ENCODE measurements at regions of chr2 and their contacts with region 1.

Region 1: DNA sequence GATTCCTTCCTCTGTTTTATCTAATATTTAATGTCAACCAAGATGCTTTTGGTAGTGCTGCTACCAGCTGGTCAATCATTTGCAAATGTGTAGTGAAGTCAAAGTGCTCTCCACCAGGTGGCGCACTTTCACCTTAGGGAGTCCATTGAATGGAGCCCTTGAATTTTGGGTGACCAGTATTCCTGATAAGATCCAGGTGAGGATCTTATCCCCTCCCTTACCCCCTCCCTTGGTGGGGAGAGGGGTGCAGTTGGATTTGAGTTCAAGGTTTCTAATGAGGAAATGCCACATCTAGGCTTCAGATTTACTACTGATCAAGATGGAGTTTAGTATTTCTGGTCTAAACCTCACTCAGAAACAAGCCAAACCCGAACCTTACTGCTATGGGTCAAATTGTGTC is 12.0 kb upstream of the E2F6 start:
- DNase-seq: peak in 2 of 3 donors; percentile 83 to 98
- ATAC-seq: peak; percentile 80
- H3K4me3 ChIP-seq: no peak overlapping the region
- H3K4me1 ChIP-seq: no peaks in the 10 kb centered on the region
- CTCF ChIP-seq: peak; percentile 63

Region 2: GRCh38 chr2:11583840-11584524 is 106.0 kb after region 1 on chr2:
- intact Hi-C with region 1: loop called (anchors 5 kb)
- DNase-seq: peak in 2 of 3 donors; percentile 67 to 72
- ATAC-seq: peak; percentile 80
- H3K4me3 ChIP-seq: no peak overlapping the region
- H3K4me1 ChIP-seq: peaks cover 3% of the 10 kb centered on the region
- CTCF ChIP-seq: peak; percentile 42

Region 3: DNA sequence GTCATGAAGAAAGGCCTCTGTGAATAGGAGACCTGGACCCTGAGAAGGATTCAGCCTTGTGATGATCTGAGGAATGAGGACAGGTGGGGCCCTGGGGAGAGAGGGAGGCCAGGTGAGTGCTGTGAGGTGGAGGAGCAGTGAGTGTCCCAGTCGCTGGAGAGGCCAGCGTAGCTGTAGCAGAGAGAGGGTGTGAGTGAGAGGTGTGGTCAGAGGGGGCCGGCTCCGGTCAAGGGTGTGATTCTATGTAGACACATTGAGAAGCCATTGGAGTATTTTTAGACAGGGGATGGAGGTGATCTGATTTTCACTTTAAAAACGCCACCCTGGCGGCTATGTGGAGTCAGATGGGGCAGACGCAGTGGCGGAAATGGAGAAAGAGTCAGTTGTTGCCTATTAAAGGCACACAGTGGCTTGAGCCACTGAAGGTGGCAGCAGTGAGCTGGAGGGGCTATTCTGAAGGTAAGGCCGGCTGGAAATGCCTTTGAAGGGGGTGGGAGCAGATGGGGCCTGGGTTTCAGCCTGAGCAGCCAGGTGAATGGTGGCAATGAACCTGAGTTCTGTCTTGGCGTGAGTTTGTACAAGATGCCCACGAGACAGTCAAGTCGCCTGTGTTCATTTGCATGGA is 111.4 kb after region 1 on chr2:
- intact Hi-C with region 1: loop called (anchors 5 kb)
- DNase-seq: no peak
- ATAC-seq: no peak
- H3K4me3 ChIP-seq: no peak overlapping the region
- H3K4me1 ChIP-seq: no peaks in the 10 kb centered on the region
- CTCF ChIP-seq: no peak

Region 4: DNA sequence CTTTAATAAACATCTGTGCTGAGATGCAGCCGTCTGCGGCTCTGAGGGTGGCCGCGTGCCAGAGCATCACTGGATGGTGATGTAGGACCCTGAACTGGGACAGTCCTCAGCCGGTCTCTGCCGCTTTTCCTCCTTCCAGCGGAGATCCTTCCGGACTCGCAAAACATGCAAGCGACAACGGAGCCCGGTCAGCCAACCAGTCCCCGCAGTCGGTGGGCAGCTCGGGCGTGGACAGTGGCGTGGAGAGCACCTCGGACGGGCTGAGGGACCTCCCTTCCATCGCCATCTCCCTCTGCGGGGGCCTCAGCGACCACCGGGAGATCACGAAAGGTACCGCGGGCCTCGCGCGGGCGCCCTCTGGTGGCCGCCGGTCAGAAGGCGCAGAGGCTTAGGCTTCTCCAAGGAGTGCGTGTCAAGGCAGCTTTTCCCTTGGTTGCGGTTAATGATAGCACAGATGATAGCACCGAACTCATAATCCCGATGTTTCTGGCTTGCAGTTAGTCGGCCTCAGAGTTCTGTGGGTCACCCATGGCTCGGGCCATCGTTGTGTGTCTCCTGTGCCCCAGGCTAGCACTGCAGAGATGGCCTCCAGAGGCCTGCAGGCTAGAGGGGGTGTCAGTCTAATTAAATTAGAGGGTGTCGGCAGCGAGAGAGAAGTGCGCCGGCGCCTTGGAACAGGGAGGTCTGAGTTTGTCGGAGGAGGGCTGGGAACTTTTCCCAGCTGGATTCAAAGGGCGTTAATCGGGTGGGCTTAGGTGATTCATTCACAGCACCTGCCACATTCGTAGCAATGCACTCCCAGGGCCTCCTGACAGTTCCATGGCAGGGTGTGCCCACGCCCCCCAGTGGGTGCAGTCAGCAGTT is 307.0 kb after region 1 on chr2:
- intact Hi-C with region 1: loop called in 1 of 2 experiments (anchors 10 kb)
- DNase-seq: peak in 2 of 3 donors; percentile 57 to 62
- ATAC-seq: peak; percentile 77
- H3K4me3 ChIP-seq: no peak overlapping the region
- H3K4me1 ChIP-seq: no peaks in the 10 kb centered on the region
- CTCF ChIP-seq: peak; percentile 77

Measured in mucosa of descending colon (tissue), 3 donors.